ENCODE measurements at regions of chr15 and their contacts with region 1.

Region 1: DNA sequence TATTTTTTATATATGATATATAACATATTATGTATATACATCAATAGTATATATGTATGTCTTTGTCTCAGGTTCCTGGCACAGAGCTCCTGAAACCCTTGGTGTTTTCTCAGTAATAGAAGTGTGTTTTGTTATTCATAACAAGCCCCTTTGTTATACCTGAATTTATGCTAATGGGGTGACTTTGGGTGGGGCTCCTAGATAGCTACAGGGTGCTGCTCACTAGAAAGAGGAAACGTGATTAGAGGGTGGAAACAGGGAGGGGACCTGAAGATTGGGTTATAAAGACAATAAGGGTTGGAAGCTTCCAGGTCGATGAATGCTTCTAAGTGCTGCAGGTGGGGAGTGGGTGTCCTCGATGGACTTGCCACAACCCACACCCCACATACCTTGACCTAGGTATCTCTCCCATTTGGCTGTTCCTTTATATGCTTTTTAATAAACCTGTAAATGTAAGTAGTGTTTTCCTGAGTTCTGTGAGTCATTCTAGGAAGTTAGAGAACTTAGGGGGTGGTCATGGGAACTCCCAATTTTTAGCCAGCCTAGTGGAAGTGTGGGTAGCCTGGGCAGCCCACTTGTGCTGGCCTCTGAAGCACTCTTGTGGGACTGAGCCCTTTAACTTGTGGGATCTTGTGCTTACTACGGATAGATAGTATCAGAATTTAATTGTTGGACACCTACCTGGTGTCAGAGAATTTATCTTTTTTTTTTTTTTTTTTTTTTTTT is 36.9 kb upstream of the C15orf39 start:
- DNase-seq: no peak
- H3K4me3 ChIP-seq: no peak overlapping the region
- H3K27ac ChIP-seq: no peak overlapping the region
- H3K4me1 ChIP-seq: peaks cover 24% of the 10 kb centered on the region
- H3K27me3 ChIP-seq: no peaks in the 10 kb centered on the region
- CTCF ChIP-seq: no peak

Region 2: DNA sequence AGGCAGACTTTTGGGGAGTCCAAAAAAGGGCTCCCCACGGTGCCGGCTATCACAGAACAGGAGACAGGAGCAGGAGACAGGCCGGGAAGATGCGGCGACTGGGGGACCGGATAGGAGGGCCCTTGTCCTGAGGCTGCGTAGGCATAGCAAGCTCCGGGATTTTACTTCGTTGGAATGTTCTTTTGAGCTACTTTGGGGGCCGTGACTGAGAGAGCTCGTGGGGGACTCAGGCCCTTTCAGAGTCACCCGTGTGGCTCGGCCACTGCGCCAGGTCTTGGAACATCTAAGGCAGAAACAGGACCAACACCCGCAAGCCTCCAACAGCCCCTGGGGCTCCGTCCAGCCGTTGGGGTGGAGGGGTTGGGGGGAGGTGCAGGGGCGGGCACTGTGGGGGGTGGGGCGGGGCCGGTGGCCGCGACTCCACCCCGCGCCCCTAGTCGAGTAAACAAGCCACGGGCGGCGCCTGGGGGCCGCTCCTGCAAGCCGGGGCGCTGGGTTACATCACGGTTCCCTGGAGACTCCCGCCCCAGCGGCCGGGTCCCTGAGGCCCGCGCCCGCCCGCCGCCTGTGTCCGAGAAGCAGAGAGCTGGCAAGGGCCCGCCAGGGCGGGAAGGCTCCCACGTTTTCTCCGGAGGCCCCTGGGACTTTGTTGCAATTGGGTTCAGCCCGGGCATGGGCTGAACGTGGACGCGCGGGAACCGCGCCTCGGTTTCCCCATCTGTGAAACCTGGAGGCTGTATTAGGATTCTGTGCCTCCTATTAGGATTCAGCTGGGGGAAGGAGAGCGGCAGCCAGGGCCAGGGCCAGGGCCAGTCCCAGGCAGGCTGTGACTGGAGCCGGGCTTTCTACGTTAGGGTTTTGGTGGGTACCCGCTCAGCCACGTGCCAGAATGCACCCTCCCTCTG is 13.6 kb after region 1 on chr15:
- CTCF ChIA-PET with region 1: no interaction called
- POLR2A ChIA-PET with region 1: interaction called, 23 read pairs
- intact Hi-C with region 1: no loop called
- DNase-seq: no peak
- H3K4me3 ChIP-seq: no peak overlapping the region
- H3K27ac ChIP-seq: no peak overlapping the region
- H3K4me1 ChIP-seq: peaks cover 37% of the 10 kb centered on the region
- H3K27me3 ChIP-seq: no peaks in the 10 kb centered on the region
- CTCF ChIP-seq: no peak